Cardiac septum (tissue), 1 donor: ENCODE measurements at regions of chr3 and their contacts with region 1.

Region 1: DNA sequence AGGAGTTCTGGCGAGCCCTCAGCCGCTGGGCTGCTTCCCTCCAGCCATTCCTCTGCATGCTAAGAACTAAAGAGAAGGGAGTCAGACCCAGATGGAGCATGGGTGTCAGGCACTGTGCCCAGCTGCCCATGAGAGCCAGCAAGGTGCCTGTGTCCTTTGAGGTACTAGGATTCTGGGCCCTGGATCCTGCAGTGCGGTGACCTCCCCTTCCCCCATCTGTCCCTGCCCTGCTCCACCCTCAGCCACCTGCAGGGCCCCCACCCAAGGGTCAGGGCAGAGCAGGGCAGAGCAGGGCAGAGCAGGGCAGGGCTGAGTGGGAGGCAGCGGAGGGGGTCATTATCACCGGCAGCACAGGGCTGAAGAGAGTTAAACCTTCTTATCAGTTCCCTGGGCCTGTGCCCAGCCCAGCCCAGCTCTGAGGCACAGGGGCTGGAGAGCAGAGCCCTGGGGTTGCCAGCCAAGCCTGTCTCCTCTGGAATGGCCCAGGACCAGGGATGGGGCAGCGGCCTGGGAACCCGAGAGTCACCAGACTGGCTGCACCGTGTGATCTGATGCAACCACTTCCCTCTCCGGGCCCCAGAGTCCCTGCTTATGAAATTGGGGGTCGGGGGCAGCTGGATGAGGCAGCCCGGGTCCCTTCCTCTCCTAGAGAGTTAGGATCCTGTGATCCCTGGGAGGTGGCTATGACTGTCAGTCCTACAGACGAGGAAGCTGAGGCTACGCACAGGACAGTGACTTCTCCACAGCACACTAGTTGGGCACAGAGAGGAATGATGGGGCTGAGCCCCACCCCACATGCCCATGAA is 17.3 kb downstream of the ZDHHC19 start:
- DNase-seq: peak; percentile 92

Region 2: DNA sequence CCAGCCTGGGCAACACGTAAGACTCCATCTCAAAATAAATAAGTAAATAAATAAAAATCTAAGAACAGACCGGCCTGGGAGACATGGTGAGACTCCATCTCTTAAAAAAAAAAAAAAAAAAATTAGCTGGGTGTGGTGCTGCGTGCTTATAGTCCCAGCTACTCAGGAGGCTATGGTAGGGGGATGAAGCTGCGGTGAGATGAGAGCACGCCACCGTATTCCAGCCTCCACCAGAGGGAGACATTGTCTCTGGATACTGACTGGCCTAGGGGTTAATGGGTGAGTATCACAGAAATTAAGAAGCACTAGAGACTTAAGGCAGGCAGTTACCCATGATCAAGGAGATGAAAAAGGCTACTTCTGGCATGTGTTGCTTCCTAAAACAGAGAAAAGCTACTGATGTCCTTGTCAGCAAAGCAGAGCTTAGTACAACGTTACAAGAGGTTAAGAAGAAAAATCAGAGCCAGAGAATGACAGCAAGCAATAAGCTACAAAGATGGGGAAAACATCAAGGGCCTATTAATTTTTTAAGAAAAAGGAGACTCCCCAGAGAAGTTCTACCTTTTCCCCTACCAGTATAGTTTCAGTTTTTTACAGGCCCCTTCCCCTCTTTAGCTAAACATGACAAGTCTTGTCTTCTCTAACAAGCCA is 120.6 kb before region 1 on chr3:
- intact Hi-C with region 1: loop called (anchors 1 kb)
- DNase-seq: no peak

Region 3: GRCh38 chr3:196081791-196082618 is 111.9 kb before region 1 on chr3 and contains the start of gene TFRC:
- intact Hi-C with region 1: loop called (anchors 2 kb)
- DNase-seq: peak; percentile 97
- total RNA-seq, gene TFRC: 131 TPM

Region 4: DNA sequence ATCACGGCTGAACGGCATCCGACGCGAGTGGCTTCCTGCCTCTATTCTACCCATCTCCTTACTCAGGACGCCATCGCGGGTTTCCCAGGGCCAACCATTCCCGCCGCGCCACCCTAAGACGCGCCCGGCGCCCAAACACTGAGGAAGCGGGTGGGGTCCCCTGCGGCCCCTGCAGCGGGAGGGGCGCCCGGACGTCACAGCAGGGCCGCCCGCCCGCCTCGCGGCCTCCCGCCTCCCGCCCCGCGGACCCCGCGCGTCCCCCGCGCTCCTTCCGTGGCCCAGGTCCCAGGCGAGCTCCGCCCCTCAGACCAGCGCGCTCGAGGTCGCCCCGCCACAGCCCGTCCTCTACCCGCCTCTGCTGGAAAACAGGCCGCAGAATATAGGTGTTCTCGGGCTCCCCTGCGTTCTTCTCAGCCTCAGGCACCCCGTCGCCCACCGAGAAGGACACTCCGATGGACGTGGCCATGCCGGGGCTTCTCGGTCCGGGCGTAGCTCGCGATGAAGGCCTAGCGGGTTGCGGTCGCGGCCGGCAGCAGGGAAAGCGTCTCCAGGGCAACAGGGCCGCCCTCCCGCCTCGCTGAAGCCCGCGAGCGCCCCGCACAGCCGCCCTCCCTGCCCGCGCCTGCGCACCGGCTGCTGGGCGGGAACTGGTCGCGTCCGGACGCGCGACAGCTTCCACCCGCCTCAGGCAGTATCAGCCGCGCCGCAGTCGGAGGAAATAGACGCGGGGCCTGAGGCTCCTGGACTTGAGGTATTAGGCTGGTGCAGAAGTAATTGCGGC is 123.9 kb after region 1 on chr3 and contains the start of gene DYNLT2B:
- intact Hi-C with region 1: no loop called
- DNase-seq: peak; percentile 95
- total RNA-seq, gene DYNLT2B: 5.0 TPM